AG04450 (cell line): ENCODE measurements at regions of chr11 and their contacts with region 1.

Region 1: DNA sequence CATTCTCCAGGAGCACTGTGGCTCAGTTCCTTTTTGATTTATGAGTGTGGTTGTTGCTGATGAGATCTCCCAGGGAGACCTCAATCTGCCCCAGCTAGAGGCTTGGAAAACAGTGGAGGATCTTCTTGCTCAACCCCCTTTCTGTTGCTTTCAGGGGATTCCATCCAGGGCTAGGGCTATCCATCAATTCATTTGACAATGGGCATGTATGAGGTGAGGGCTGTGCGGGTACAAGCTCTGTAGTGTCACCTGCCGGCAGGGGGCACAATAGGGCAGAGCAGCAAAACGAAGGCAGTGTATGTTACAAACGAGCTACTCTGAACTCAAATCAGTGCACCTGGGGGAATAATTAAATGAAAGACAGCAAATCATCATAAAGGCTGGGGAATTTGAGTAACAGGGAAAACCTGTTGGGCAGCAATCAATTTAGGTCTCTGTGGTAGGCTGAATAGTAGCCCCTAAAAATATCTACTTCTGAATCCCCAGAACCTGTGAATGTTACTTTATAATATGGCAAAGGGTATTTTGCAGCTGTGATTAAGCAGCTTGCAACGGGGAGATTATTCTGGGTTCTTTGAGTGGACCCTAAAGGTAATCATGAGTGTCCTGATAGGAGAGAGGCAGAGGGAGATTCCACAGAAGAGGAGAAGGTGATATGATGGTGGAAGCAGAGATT is 170.3 kb upstream of the ZBED5 start:
- DNase-seq: no peak
- H3K4me3 ChIP-seq: no peak overlapping the region
- H3K27ac ChIP-seq: no peak overlapping the region
- H3K27me3 ChIP-seq: no peaks in the 10 kb centered on the region
- CTCF ChIP-seq: peak; percentile 84

Region 2: DNA sequence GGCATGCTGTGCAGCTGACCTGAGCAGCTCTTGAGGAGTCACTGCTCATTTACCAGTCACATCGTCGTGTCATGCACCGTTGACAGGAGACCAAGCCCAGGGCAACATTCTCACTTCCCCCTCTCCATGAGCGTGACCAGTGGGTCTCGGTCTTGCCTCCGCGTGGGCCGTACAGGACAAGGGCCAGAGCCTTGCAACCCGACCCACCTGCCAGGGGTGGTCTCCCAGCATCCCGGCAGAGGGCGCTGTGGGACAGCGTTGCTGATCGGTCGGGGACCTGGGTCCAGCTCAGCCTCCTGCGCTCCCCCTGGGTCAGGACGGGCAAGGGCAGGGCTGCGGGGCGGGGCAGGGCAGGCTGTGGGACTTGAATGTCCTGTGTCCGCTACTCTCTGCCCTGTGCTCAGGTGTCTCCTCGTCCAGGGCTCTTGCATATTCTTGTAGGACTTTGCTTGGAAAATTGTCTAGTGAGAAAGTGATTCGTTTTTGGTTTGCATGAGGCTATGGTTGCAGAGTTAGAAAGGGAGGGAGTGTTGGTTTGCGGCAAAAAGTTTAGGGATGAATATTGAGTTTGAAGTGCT is 235.7 kb before region 1 on chr11:
- CTCF ChIA-PET with region 1: interaction called, 12 read pairs
- POLR2A ChIA-PET with region 1: no interaction called
- DNase-seq: peak; percentile 32
- H3K4me3 ChIP-seq: peak overlapping the region; percentile 30; the same call in 1 of the 2 replicates
- H3K27ac ChIP-seq: no peak overlapping the region
- H3K27me3 ChIP-seq: no peaks in the 10 kb centered on the region
- CTCF ChIP-seq: peak; percentile 85

Region 3: GRCh38 chr11:10943968-10944367 is 84.2 kb before region 1 on chr11:
- CTCF ChIA-PET with region 1: interaction called, 10 read pairs
- POLR2A ChIA-PET with region 1: no interaction called
- DNase-seq: peak; percentile 34
- H3K4me3 ChIP-seq: no peak overlapping the region
- H3K27ac ChIP-seq: peak overlapping the region; percentile 25
- H3K27me3 ChIP-seq: peaks cover 12% of the 10 kb centered on the region
- CTCF ChIP-seq: no peak

Region 4: GRCh38 chr11:11016068-11016467 is 12.1 kb before region 1 on chr11:
- CTCF ChIA-PET with region 1: interaction called, 15 read pairs
- POLR2A ChIA-PET with region 1: no interaction called
- DNase-seq: no peak
- H3K4me3 ChIP-seq: no peak overlapping the region
- H3K27ac ChIP-seq: no peak overlapping the region
- H3K27me3 ChIP-seq: peaks cover 35% of the 10 kb centered on the region
- CTCF ChIP-seq: no peak

Region 5: GRCh38 chr11:11078344-11079086 is 50.4 kb after region 1 on chr11:
- CTCF ChIA-PET with region 1: interaction called, 20 read pairs
- POLR2A ChIA-PET with region 1: no interaction called
- DNase-seq: no peak
- H3K4me3 ChIP-seq: no peak overlapping the region
- H3K27ac ChIP-seq: no peak overlapping the region
- H3K27me3 ChIP-seq: peaks cover 42% of the 10 kb centered on the region
- CTCF ChIP-seq: peak; percentile 31

Region 6: GRCh38 chr11:11157185-11157584 is 129.0 kb after region 1 on chr11:
- CTCF ChIA-PET with region 1: interaction called, 21 read pairs
- POLR2A ChIA-PET with region 1: no interaction called
- DNase-seq: no peak
- H3K4me3 ChIP-seq: no peak overlapping the region
- H3K27ac ChIP-seq: no peak overlapping the region
- H3K27me3 ChIP-seq: peaks cover 15% of the 10 kb centered on the region
- CTCF ChIP-seq: peak; percentile 59

Region 7: DNA sequence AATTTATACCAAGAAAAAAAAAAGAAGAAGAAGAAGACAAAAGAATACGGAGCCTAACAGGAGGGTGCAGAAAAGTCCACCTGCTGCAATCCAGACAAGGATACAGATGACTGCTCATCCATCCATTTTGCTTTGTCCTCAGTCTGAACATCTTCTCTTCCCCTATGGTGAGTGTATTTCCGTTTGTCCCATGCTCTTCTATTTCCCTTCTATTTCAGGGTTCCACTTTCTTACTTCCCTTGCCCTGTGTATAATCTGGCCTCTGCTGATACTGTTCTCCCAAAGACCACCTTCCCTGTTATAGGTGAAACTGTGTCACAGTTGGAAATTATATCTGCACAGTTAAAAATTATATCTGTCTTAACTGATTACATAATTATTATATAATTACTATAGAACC is 764.9 kb after region 1 on chr11:
- CTCF ChIA-PET with region 1: interaction called, 177 read pairs
- POLR2A ChIA-PET with region 1: interaction called, 3 read pairs
- DNase-seq: no peak
- H3K4me3 ChIP-seq: no peak overlapping the region
- H3K27ac ChIP-seq: no peak overlapping the region
- H3K27me3 ChIP-seq: peaks cover 3% of the 10 kb centered on the region
- CTCF ChIP-seq: no peak